BJ (cell line): ENCODE measurements at regions of chr22 and their contacts with region 1.

Region 1: GRCh38 chr22:36017651-36018091 is 11.0 kb downstream of the RBFOX2 start:
- DNase-seq: no peak
- H3K4me3 ChIP-seq: no peak overlapping the region
- H3K27me3 ChIP-seq: no peaks in the 10 kb centered on the region
- CTCF ChIP-seq: no peak

Region 2: GRCh38 chr22:35910003-35910769 is 107.5 kb before region 1 on chr22:
- CTCF ChIA-PET with region 1: no interaction called
- POLR2A ChIA-PET with region 1: no interaction called
- DNase-seq: no peak
- H3K4me3 ChIP-seq: no peak overlapping the region
- H3K27me3 ChIP-seq: no peaks in the 10 kb centered on the region
- CTCF ChIP-seq: no peak

Region 3: GRCh38 chr22:35947794-35948425 is 69.8 kb before region 1 on chr22:
- CTCF ChIA-PET with region 1: no interaction called
- POLR2A ChIA-PET with region 1: interaction called, 13 read pairs
- DNase-seq: no peak
- H3K4me3 ChIP-seq: no peak overlapping the region
- H3K27me3 ChIP-seq: no peaks in the 10 kb centered on the region
- CTCF ChIP-seq: no peak

Region 4: DNA sequence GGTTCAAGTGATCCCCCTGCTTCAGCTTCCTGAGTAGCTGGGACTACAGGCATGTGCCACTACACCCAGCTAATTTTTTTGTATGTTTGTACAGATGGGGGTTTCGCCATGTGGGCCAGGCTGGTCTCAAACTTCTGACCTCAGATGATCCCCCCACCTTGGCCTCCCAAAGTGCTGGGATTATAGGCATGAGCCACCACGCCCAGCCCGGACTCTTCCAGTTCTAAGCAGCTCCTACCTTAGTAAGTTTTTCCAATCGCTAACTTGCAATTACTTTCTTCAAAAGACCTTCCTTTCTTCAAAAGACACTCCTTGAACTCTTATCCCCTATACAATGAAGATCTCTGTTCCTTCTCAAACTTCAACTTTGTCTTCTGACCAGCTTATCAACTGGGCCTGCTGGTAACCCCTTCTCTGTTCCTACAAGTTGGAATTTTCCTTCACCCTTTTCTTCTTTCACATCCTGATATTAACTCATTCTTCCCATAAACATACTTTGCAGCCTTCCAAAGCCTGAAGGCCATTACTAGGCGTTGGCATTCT is 14.9 kb before region 1 on chr22:
- CTCF ChIA-PET with region 1: interaction called, 13 read pairs
- POLR2A ChIA-PET with region 1: no interaction called
- DNase-seq: no peak
- H3K4me3 ChIP-seq: no peak overlapping the region
- H3K27me3 ChIP-seq: no peaks in the 10 kb centered on the region
- CTCF ChIP-seq: no peak

Region 5: GRCh38 chr22:36077271-36077670 is 59.6 kb after region 1 on chr22:
- CTCF ChIA-PET with region 1: no interaction called
- POLR2A ChIA-PET with region 1: no interaction called
- DNase-seq: no peak
- H3K4me3 ChIP-seq: no peak overlapping the region
- H3K27me3 ChIP-seq: no peaks in the 10 kb centered on the region
- CTCF ChIP-seq: no peak